ENCODE measurements at regions of chr5 and their contacts with region 1.

Region 1: DNA sequence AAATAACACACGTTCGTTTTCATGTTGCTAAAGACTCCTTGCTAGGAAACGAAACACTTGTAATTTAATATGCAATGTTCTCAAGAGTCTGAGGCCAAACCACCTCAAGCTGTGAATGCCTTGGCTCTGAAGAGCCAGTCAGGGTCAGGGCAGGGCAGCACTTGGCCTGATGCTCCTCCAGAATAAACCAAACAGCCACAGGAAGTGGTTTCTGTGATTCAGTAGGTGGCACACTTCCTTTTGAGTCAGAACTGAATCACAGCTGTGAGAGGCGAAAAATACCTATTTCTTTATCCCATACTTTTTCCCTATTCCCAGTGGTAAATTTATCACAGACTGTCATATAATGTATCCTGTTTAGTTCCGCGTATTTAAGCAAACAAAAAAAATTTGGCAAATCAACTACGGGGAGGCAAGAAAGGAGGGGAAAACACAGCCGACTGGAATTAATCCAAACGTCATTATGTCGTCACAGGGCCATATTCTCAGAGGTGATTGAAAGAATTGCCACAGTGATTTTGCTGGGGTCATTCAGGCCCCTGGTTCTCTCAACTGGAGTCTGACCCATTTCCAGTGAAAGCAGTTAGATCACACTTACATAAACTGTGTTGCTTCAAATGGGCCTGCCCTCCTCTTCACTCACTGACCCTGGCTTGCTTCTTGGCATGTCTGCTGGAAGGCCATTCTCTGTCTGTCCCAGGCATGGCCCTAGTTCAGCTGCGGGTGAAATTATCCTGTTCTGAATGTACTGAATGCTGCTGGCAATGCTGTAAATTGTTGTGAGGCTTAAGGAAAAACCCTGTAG is 71.2 kb downstream of the ARRDC3 start:
- DNase-seq: peak; percentile 77

Region 2: GRCh38 chr5:91212714-91213092 is 99.2 kb before region 1 on chr5:
- intact Hi-C with region 1: loop called (anchors 5 kb)
- DNase-seq: no peak

Region 3: DNA sequence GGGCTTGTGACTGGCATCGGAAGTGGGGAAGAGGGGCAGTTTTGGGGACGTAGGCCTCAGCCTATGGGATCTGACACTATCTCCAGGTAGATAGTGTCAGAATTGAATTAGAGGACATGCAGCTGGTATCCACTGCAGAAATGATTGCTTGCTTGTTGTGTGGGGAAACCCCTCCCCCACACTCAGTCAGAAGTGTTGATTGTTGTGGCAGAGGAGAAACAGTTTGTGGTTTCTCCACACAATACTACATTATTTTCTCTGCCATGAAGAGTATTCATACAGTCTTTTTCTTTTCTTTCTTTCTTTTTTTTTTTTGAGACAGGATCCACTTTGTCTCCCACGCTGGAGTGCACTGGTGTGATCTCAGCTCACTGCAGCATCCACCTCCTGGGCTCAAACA is 42.7 kb before region 1 on chr5:
- intact Hi-C with region 1: no loop called
- DNase-seq: no peak

Region 4: GRCh38 chr5:91280362-91281269 is 31.3 kb before region 1 on chr5:
- intact Hi-C with region 1: loop called (anchors 1 kb)
- DNase-seq: peak; percentile 98